Activated naive CD4-positive, alpha-beta T cell treated with anti-CD3 and anti-CD28 coated beads for 36 hours (primary cell): ENCODE measurements at regions of chr4 and their contacts with region 1.

Region 1: GRCh38 chr4:26076000-26076587 is 162.1 kb downstream of the SMIM20 start:
- DNase-seq: peak; percentile 80
- H3K4me3 Mint-ChIP-seq: no peak overlapping the region
- H3K27ac Mint-ChIP-seq: peak overlapping the region; percentile 85
- H3K4me1 Mint-ChIP-seq: peaks cover 81% of the 10 kb centered on the region
- H3K27me3 Mint-ChIP-seq: no peaks in the 10 kb centered on the region

Region 2: DNA sequence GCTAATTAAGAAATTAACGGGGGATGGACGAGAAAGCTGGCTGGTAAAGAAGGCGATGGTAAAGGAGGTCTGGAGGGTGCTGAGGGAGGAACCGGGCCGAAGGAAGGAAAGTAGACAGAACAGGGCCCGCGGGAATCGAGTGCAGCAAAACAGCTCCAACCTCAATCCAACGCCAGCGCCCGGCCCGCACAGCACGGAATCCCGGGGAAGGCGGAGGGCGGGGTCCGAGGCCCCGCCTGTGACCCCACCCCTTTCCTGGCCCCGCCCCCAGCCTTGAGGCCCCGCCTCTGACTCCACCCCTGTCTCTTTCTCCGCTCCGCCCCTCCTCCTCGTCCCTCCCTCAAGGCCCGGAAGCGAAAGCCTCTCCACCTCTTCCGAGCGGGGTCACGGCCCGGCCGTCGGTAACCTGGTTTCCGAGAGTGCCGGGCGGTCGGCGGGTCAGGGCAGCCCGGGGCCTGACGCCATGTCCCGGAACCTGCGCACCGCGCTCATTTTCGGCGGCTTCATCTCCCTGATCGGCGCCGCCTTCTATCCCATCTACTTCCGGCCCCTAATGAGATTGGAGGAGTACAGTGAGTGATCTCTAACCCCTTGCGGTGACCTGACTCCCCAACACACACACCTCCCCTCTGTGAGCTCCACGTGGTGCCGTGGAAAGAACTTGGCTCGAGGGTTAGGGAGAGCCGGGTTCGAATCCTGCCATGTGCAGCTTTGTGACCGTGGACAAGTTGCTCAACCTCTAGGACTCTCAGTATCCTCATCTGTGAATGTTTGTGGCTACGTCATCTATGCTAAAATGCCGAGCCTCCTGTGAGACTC is 162.0 kb before region 1 on chr4 and contains the start of gene SMIM20:
- CTCF ChIA-PET with region 1: no interaction called
- intact Hi-C with region 1: loop called (anchors 1 kb)
- DNase-seq: peak; percentile 89
- H3K4me3 Mint-ChIP-seq: peak within 1 kb of the TSS; percentile 96
- H3K27ac Mint-ChIP-seq: peak within 1 kb of the TSS; percentile 97
- H3K4me1 Mint-ChIP-seq: peaks cover 17% of the 10 kb centered on the region
- H3K27me3 Mint-ChIP-seq: no peaks in the 10 kb centered on the region
- total RNA-seq, gene SMIM20: 28.1 to 33.2 TPM

Region 3: GRCh38 chr4:26061248-26061986 is 14.7 kb before region 1 on chr4:
- CTCF ChIA-PET with region 1: interaction called, 6 read pairs
- intact Hi-C with region 1: loop called (anchors 1 kb)
- DNase-seq: peak; percentile 54
- H3K4me3 Mint-ChIP-seq: no peak overlapping the region
- H3K27ac Mint-ChIP-seq: no peak overlapping the region
- H3K4me1 Mint-ChIP-seq: peaks cover 21% of the 10 kb centered on the region
- H3K27me3 Mint-ChIP-seq: peaks cover 6% of the 10 kb centered on the region

Region 4: GRCh38 chr4:26105815-26106699 is 30.0 kb after region 1 on chr4:
- CTCF ChIA-PET with region 1: no interaction called
- intact Hi-C with region 1: no loop called
- DNase-seq: no peak
- H3K4me3 Mint-ChIP-seq: no peak overlapping the region
- H3K27ac Mint-ChIP-seq: no peak overlapping the region
- H3K4me1 Mint-ChIP-seq: no peaks in the 10 kb centered on the region
- H3K27me3 Mint-ChIP-seq: peaks cover 9% of the 10 kb centered on the region

Region 5: DNA sequence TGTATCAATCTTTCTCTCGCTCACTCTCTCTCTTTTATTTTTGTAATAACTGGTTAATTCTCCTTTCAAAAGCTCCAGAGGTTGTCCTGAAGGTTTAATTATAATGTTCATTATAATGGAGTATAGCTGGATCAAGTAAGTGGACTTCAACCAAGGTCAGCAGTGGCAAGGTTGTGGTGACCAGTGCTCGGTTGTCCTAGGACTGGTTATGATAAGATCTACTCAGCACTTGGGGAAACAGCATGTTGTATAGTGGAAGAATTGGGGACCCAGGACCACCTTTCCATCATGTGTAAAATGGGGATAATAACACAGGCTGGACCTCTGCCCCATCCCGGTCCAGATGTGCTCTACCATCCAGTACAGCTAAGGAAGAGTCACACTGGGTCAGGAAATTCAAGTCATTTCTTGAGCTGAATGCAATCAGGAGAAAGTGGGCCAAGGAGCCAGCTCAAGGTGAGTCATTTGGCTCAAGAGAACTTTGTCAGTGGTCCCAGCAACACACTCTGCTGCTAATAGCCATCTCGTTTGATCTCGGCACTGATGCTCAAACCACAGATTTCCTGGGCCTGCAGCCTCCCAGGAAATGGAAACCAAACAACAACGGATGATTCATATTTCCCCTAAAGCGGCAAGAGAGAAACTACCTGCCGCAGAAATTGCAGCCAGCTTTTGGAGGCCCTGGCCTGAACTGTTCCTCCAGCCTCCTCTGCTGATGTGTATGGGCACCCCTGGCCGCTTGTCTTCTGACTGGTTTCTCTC is 121.1 kb after region 1 on chr4:
- CTCF ChIA-PET with region 1: interaction called, 13 read pairs
- intact Hi-C with region 1: loop called (anchors 1 kb)
- DNase-seq: peak; percentile 86
- H3K4me3 Mint-ChIP-seq: peak overlapping the region; percentile 0
- H3K27ac Mint-ChIP-seq: peak overlapping the region; percentile 88
- H3K4me1 Mint-ChIP-seq: peaks cover 72% of the 10 kb centered on the region
- H3K27me3 Mint-ChIP-seq: peaks cover 1% of the 10 kb centered on the region

Region 6: DNA sequence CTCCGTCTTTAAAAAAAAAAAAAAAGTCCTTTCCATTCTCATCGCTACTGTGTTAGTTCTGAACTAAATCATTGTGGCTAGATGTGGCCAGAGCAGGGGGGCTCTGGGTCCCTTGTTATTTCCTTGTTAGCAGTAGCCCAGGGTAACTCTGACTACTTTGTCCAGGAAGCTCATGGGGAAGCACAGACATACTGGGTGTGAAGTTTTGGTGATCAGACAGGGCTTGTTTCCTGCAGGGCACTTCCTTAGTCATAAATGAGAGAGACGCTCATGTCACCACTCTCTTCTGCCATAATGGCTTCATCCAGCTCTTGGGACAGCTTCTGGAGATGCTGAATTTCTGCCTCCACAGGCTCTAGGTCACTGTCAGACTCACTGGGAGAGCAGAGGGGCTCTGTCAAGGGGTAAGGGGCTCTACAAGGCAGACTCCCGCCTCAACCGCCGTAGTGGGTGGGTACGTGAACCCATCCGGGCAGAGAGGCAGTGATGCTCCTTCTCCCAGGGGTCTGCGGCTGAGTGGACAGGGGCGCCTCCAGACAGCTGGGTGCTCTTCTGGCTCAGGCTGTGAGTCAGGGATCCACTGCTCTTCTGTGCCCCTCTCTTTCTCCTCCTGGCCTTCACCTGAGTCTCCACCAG is 797.4 kb after region 1 on chr4:
- CTCF ChIA-PET with region 1: no interaction called
- intact Hi-C with region 1: loop called (anchors 2 kb)
- DNase-seq: peak; percentile 89
- H3K4me3 Mint-ChIP-seq: no peak overlapping the region
- H3K27ac Mint-ChIP-seq: peak overlapping the region; percentile 69
- H3K4me1 Mint-ChIP-seq: peaks cover 80% of the 10 kb centered on the region
- H3K27me3 Mint-ChIP-seq: no peaks in the 10 kb centered on the region